ENCODE measurements at regions of chr3 and their contacts with region 1.

Region 1: GRCh38 chr3:169662132-169662842 is 1.2 kb downstream of the MECOM start:
- DNase-seq: peak; percentile 73
- ATAC-seq: peak; percentile 72
- H3K4me3 ChIP-seq: peak overlapping the region; percentile 97
- H3K27ac ChIP-seq: peak overlapping the region; percentile 11
- H3K4me1 ChIP-seq: peaks cover 12% of the 10 kb centered on the region
- H3K27me3 ChIP-seq: no peaks in the 10 kb centered on the region
- CTCF ChIP-seq: peak; percentile 67

Region 2: DNA sequence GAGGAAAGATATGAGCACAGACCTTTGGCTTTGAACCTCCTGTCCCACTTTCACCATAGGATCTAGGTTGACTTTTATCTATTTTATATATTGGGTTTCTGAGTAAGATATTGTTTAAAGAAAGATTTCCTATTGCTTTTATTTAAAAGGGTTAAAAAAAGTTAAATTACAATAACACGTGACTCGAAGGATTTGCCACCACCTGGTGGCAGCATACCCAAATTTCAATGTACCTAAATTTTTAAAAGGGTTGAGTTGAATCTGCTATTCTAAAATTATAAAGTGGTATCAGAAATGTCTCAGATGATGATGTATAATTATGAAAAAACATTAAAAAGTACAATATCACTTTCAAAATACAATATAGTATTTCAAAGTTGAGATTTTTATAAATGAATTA is 367.2 kb before region 1 on chr3:
- CTCF ChIA-PET with region 1: no interaction called
- POLR2A ChIA-PET with region 1: no interaction called
- intact Hi-C with region 1: loop called (anchors 5 kb)
- DNase-seq: peak; percentile 52
- ATAC-seq: no peak
- H3K4me3 ChIP-seq: no peak overlapping the region
- H3K27ac ChIP-seq: no peak overlapping the region
- H3K4me1 ChIP-seq: peaks cover 7% of the 10 kb centered on the region; the same call in 1 of the 2 replicates
- H3K27me3 ChIP-seq: no peaks in the 10 kb centered on the region
- CTCF ChIP-seq: peak; percentile 71

Region 3: DNA sequence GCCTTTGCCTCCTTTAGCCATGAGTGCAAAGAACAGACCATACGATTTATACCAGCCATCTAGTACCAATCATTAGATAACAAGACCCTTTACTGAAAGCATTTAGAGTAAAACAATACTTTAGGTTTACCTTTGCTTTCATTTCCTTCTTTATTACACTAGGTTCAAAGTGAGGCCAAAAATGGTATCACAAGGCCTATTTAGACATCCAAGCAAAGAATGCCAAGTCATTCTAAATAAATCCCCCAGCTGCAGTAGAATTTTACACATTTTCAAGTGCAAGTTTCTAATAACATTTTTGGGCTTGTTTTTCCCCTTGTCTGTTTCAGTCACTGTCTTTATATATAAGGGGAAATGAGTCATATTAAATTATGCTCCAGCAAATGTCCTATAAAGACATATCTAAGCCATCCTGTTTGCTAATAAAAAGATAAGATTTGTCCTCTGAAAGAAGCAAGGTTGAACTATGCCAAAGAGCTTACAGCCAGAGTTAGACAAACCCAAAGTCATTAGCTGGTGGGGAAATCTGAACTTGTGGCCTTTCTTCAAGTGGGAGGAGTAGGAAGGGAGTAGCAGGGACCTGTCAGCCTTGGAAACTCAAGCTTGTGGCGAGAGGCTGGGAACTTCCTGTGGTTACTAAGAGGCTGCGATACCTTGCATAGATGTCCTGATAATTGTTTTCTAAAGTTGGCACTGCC is 231.4 kb before region 1 on chr3:
- CTCF ChIA-PET with region 1: no interaction called
- POLR2A ChIA-PET with region 1: no interaction called
- intact Hi-C with region 1: loop called (anchors 2 kb)
- DNase-seq: peak; percentile 89
- ATAC-seq: peak; percentile 93
- H3K4me3 ChIP-seq: peak overlapping the region; percentile 18; the same call in 1 of the 2 replicates
- H3K27ac ChIP-seq: peak overlapping the region; percentile 89
- H3K4me1 ChIP-seq: peaks cover 41% of the 10 kb centered on the region
- H3K27me3 ChIP-seq: no peaks in the 10 kb centered on the region
- CTCF ChIP-seq: no peak

Region 4: GRCh38 chr3:169497567-169498257 is 164.6 kb before region 1 on chr3:
- CTCF ChIA-PET with region 1: interaction called, 4 read pairs
- POLR2A ChIA-PET with region 1: no interaction called
- intact Hi-C with region 1: loop called (anchors 2 kb)
- DNase-seq: peak; percentile 95
- ATAC-seq: peak; percentile 91
- H3K4me3 ChIP-seq: peak overlapping the region; percentile 12; the same call in 1 of the 2 replicates
- H3K27ac ChIP-seq: peak overlapping the region; percentile 44
- H3K4me1 ChIP-seq: peaks cover 19% of the 10 kb centered on the region
- H3K27me3 ChIP-seq: no peaks in the 10 kb centered on the region
- CTCF ChIP-seq: no peak

Region 5: DNA sequence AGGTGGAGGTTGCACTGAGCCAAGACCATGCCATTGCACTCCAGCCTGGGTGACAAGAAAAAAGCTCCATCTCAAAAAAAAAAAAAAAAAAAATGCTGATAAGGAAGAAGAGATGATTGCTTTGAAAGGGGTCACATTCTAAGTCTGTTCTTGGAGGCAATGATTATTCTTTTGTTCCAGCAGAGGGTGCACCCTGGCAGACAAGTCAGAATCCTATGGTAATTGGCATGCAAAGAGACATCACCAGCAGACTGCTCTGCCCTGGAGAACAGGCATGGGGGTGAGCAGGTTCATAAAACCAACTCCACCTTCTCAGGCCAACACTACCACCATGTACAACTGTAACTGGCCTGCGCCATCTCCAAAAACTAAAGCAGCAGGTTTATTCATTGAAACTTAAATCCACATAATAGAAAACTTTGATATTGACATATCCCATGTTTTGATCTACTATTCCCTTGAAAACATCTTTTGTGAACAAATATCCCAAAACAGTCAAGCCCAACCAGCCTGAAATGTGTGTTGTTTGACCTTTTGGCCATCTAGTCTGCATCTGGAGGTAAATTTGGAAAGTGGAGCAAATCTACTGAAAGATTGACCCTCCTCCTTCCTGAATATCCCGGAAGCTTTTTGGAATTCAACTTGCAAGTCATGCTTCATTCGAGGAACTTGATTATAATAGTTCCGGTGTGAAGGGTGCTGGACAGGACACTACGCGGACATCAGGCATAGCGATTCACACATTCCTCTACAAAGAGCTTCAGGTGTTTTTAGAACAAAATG is 99.1 kb before region 1 on chr3:
- CTCF ChIA-PET with region 1: interaction called, 3 read pairs
- POLR2A ChIA-PET with region 1: no interaction called
- intact Hi-C with region 1: loop called (anchors 1 kb)
- DNase-seq: peak; percentile 24
- ATAC-seq: peak; percentile 76
- H3K4me3 ChIP-seq: no peak overlapping the region
- H3K27ac ChIP-seq: no peak overlapping the region
- H3K4me1 ChIP-seq: no peaks in the 10 kb centered on the region
- H3K27me3 ChIP-seq: no peaks in the 10 kb centered on the region
- CTCF ChIP-seq: peak; percentile 41

Region 6: GRCh38 chr3:169604118-169604517 is 58.2 kb before region 1 on chr3:
- CTCF ChIA-PET with region 1: no interaction called
- POLR2A ChIA-PET with region 1: no interaction called
- intact Hi-C with region 1: no loop called
- DNase-seq: no peak
- ATAC-seq: peak; percentile 37
- H3K4me3 ChIP-seq: no peak overlapping the region
- H3K27ac ChIP-seq: no peak overlapping the region
- H3K4me1 ChIP-seq: peaks cover 22% of the 10 kb centered on the region
- H3K27me3 ChIP-seq: no peaks in the 10 kb centered on the region
- CTCF ChIP-seq: no peak

Measured in PC-3 (cell line).